PC-9 (cell line): ENCODE measurements at regions of chr4 and their contacts with region 1.

Region 1: GRCh38 chr4:179415037-179415846 is 1973.0 kb upstream of the AGA start:
- DNase-seq: no peak
- H3K4me3 ChIP-seq: no peak overlapping the region
- H3K27ac ChIP-seq: no peak overlapping the region
- H3K4me1 ChIP-seq: no peaks in the 10 kb centered on the region
- H3K27me3 ChIP-seq: no peaks in the 10 kb centered on the region
- CTCF ChIP-seq: no peak

Region 2: DNA sequence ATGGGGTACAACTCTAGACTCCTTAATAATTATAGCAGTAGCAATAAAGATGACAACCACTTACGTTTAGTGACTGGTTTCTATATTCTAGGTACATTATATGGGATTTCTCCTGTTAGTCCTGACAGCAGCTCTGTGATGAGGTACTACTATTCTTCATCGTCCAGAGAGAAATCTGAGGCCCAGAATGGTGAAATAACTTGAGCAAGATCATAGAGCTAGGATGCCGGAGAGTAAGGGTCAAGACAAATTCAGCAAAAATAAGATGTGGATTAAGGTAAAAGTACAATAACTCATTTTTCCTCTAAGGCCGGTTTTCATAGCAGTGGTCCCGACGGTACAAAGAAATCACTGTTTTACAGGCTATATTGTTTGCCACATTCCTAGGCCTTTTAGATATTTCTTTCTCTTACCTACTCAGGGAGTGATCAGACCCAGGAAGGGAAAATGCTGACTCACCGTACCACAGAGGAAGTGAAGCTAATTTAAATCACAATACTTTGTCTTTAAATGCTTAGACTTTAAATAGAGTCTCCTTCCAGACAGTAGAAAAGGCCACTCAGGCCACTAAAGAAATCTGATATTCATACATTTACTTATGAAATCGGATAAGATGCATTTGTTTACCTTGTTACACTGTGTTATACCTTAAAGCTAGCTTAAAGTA is 50.0 kb after region 1 on chr4:
- CTCF ChIA-PET with region 1: no interaction called
- POLR2A ChIA-PET with region 1: no interaction called
- intact Hi-C with region 1: loop called (anchors 2 kb)
- DNase-seq: peak in 1 of 2 experiments; percentile 28
- H3K4me3 ChIP-seq: no peak overlapping the region
- H3K27ac ChIP-seq: peak overlapping the region; percentile 20; the same call in 1 of the 2 replicates
- H3K4me1 ChIP-seq: 0 out of 2 replicates have a peak, but pooled peaks cover 8% of the 10 kb centered on the region
- H3K27me3 ChIP-seq: no peaks in the 10 kb centered on the region
- CTCF ChIP-seq: no peak

Region 3: GRCh38 chr4:179624768-179625181 is 209.5 kb after region 1 on chr4:
- CTCF ChIA-PET with region 1: no interaction called
- POLR2A ChIA-PET with region 1: no interaction called
- intact Hi-C with region 1: loop called (anchors 5 kb)
- DNase-seq: peak; percentile 33 to 47
- H3K4me3 ChIP-seq: no peak overlapping the region
- H3K27ac ChIP-seq: no peak overlapping the region
- H3K4me1 ChIP-seq: no peaks in the 10 kb centered on the region
- H3K27me3 ChIP-seq: no peaks in the 10 kb centered on the region
- CTCF ChIP-seq: no peak

Region 4: DNA sequence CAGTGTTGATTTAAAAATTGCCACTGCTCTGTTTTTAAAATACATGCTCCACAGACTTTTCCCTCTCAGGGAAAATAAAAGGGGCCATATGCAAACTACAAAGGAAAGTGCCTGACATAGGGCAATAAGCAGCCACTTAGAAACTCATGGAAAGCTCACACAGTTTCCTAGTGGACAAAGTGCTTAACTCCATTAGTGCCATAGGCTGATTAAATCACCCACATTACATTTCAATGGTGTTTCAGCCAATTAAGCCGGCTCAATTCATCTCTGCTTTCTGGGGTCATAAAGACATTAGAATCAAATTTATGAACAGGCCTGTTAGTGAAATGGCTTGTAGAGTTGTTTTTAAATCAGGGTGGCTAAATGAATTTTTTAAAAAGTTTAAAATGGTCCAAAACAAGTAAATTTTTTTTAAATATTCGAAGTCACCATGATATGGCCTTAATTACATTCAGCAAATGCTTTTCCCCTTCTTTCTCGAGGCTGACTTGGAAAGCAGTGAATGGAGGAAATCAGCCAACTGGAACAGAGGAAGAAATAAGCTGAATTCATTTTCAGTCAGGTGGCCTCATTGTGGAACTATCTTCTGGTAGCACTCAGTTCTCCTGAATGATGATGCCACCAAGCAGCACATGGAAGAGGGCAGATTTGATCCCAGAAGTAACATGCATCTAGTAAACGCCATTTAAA is 332.1 kb after region 1 on chr4:
- CTCF ChIA-PET with region 1: no interaction called
- POLR2A ChIA-PET with region 1: no interaction called
- intact Hi-C with region 1: no loop called
- DNase-seq: no peak
- H3K4me3 ChIP-seq: no peak overlapping the region
- H3K27ac ChIP-seq: no peak overlapping the region
- H3K4me1 ChIP-seq: no peaks in the 10 kb centered on the region
- H3K27me3 ChIP-seq: no peaks in the 10 kb centered on the region
- CTCF ChIP-seq: no peak